Activated CD4-positive, alpha-beta T cell treated with anti-CD3 and anti-CD28 coated beads for 36 hours (primary cell): ENCODE measurements at regions of chr1 and their contacts with region 1.

Region 1: DNA sequence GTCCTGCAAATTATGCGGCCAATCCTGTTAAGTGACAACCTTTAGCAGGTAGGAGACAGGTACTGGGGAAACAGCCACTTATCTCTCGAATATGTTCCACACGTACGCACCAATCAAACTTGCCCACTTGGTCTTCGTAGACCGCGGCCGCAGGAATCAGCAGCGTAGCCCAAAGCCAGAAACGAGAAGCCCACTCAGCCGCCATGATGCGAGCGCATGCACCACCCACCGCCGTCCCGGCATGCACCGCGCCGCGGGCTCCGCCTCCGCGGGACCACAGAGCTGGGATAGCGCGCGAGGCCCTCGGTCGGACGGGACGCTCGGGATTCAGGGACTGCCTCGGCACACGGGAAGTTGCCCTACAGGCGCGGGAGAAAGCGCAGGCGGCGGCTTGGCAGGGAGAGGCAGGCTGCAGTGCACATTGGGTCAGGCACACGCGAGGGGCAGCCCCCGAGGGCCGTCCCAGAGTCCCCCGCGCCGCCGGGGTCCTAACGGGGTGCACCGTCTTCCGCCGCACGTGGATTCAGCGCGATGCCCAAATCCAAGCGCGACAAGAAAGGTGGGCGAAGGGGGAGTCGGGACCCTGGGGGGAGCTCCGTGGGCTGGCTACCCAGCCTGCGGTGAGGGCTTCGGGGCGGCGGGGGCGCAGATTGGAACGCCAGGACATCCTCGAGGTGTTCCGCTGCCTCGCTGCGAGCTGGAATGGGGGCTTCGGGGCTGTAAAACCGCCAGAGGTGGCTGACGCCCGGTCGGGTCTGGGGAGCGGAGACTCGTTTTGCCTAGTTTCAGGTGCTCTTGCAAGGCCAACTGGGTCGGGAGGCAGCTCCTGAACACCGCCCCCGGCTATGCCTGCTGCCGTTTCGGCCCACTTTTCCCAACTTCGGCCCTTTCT is at the starts of genes EMC1 and MRTO4:
- DNase-seq: peak; percentile 94
- ATAC-seq: peak; percentile 87
- H3K4me3 Mint-ChIP-seq: peak within 1 kb of the TSS; percentile 99
- H3K27ac Mint-ChIP-seq: peak within 1 kb of the TSS; percentile 96
- H3K4me1 Mint-ChIP-seq: peaks cover 45% of the 10 kb centered on the region
- H3K27me3 Mint-ChIP-seq: no peaks in the 10 kb centered on the region
- total RNA-seq, gene EMC1: 45.0 to 59.0 TPM
- total RNA-seq, gene MRTO4: 82.6 to 95.0 TPM

Region 2: DNA sequence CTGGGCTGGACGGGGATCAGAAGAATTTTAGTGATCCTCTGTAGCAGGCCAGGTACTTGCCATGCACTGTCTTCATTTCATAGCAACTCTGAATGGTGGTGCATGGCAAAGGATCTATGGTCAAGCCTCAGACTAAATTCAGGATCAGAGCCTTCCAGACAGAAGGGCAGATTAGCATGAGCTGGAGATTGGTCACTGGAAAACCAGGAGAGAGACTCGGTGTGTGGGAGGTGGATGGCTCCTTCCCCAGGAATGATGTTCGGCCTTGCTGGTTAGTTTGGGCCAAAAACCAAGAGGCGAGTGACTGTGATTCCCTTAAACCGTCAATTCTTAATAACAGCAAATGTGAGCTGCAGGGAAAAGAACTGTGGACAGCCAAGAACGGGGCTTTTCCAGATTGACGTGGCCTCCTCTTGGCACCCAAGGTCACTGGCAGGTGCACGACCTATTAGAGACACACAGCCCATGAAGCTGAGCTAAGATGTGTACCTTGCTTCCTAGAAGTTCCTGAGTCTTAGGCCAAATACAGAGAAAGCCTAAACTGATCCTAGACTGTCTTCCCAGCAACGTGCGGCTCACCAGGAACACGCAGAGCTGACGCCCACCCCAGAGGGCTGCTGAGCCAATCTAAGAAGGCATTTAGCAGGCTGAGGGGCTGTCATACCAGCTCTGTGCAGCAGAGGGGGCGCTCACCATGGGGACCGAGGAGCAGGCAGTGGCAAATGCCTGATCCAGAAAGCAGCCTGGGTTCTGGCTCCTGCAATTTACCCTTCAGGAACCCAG is 367.7 kb before region 1 on chr1:
- CTCF ChIA-PET with region 1: no interaction called
- POLR2A ChIA-PET with region 1: interaction called, 12 read pairs
- intact Hi-C with region 1: no loop called
- DNase-seq: peak; percentile 85
- ATAC-seq: peak; percentile 87
- H3K4me3 Mint-ChIP-seq: no peak overlapping the region
- H3K27ac Mint-ChIP-seq: no peak overlapping the region
- H3K4me1 Mint-ChIP-seq: no peaks in the 10 kb centered on the region
- H3K27me3 Mint-ChIP-seq: no peaks in the 10 kb centered on the region

Region 3: DNA sequence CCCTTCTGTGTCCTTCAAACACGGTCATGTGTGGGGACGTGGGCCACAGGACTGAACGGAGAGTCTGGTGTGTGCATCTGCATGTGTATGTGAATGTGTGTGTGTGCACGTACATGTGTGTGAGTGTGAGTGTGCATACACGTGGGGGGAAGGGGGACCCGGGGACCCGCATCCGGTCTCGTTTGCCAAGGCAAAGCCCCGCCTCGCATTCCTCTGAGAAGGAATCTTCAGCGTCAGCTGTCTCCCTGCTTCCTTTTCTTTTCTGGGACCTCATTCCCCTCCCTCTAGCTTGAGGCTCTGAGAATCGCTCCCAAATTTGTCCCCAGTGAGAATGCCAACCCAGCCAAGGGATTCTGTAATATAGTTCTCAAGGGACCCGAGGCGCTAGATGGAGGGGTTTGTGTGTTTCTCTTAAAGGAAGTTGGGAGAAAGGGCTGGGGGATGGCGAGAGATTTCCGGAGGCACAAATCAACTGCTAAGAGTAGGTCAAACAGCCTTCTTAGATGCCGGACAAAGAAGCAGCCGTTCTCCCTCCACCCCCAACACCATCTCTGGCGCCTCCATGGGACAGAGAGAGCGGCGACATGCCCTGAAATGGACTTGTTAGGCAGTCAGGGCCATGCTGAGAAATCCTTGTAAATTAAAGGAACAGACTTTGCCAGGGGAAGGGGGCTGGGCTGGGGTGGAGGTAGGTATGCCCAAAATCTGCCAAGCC is 301.7 kb before region 1 on chr1:
- CTCF ChIA-PET with region 1: no interaction called
- POLR2A ChIA-PET with region 1: interaction called, 3 read pairs
- intact Hi-C with region 1: loop called in 1 of 2 experiments (anchors 2 kb)
- DNase-seq: peak; percentile 64
- ATAC-seq: no peak
- H3K4me3 Mint-ChIP-seq: peak overlapping the region; percentile 86
- H3K27ac Mint-ChIP-seq: peak overlapping the region; percentile 92
- H3K4me1 Mint-ChIP-seq: peaks cover 93% of the 10 kb centered on the region
- H3K27me3 Mint-ChIP-seq: no peaks in the 10 kb centered on the region

Region 4: DNA sequence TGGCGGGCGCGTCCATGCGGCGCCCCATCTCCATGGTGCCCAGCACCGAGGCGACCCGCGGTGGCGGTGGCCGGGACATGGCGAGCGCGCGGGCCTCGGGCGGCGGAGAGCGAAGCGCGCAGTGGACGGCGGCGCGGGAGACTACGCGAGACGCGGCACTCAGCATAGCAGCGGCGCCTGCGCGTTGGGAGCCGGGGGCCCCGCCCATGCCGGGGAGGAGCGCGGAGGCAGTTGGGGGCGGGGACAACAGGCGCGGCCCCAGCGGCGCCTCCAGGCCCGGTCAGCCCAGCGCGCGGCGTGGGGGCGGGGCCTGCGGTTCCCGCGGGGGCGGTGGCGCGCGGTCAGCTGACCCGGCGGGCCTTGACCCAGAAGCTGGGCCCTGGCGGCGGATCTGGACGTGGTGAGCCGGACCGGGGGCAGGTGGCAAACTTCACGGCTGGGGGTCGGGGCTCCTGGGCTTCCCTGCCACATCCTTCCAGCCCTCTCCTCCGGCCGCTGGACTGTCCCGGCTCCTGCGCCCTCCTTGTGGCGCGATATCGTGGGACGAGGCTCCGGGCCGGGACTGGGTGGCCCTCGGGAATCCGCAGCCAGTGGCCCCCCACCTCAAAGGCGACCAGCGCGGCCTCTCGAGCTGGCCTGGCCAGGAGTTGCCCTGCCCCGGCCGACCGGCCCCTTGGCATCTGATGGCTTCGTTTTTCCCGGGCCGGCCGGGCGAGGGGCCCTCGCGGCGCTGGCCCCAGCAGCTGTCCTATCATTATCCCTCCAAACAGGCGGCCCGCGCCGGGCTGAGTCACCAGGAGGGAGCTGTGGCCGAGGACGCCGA is 60.6 kb after region 1 on chr1 and contains the starts of genes AKR7A2 and SLC66A1:
- CTCF ChIA-PET with region 1: no interaction called
- POLR2A ChIA-PET with region 1: interaction called, 4 read pairs
- intact Hi-C with region 1: loop called (anchors 1 kb)
- DNase-seq: peak; percentile 95
- ATAC-seq: peak; percentile 97
- H3K4me3 Mint-ChIP-seq: peak within 1 kb of the TSS; percentile 78
- H3K27ac Mint-ChIP-seq: peak within 1 kb of the TSS; percentile 61
- H3K4me1 Mint-ChIP-seq: peaks cover 23% of the 10 kb centered on the region
- H3K27me3 Mint-ChIP-seq: no peaks in the 10 kb centered on the region
- total RNA-seq, gene AKR7A2: 41.3 to 43.0 TPM
- total RNA-seq, gene SLC66A1: 5.9 to 6.5 TPM

Region 5: DNA sequence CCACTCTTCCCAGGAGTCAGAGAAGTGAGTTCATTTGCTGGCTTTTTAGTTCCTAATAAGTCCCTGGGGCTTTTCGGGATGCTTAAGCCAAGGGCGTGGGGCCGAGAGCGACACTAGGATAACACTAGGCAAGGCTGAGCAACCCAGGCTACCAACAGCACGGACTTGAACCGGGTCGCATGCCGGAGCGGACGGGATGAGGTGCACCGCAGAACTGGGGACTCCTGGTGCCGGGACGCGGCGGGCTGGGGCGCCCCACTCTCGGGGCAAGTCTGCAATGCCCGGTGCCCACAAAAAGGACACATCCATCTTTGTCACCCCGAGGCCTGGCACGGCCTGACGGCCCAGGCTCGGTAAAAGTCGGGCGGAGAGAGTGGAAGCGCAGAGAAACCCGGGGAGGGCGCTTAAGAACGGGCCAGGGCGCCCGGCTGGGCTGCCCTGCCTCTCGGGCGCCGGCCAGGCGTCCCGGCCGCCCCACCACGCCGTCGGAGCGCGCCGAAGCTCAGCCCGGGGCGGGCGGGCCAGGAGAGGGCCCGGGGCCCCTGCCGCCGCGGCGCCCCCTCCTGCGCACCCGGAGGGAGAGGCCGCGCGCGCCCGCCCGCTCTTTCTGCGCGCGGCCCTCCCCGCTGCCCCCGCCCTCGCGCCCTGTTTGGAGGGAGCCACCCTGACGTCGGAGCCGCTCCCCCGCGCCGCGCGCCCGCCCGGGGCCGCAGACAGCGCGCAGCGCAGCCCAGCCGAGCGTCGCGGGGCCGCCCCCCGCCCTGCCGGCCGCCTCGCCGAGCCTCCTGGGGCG is 392.2 kb after region 1 on chr1 and contains the start of gene NBL1:
- CTCF ChIA-PET with region 1: no interaction called
- POLR2A ChIA-PET with region 1: no interaction called
- intact Hi-C with region 1: loop called in 1 of 2 experiments (anchors 2 kb)
- DNase-seq: peak; percentile 84
- ATAC-seq: peak; percentile 84
- H3K4me3 Mint-ChIP-seq: peak within 1 kb of the TSS; percentile 88
- H3K27ac Mint-ChIP-seq: peak within 1 kb of the TSS; percentile 64
- H3K4me1 Mint-ChIP-seq: peaks cover 21% of the 10 kb centered on the region
- H3K27me3 Mint-ChIP-seq: peaks cover 18% of the 10 kb centered on the region
- total RNA-seq, gene NBL1: 10.5 to 10.7 TPM